ENCODE measurements at regions of chr15 and their contacts with region 1.

Region 1: GRCh38 chr15:51649659-51650521 is 27.3 kb upstream of the DMXL2 start:
- DNase-seq: peak; percentile 81
- H3K4me3 ChIP-seq: no peak overlapping the region
- H3K27ac ChIP-seq: no peak overlapping the region
- H3K4me1 ChIP-seq: peaks cover 2% of the 10 kb centered on the region
- H3K27me3 ChIP-seq: peaks cover 2 to 7% of the 10 kb centered on the region in 2 experiments
- CTCF ChIP-seq: peak; percentile 47 to 62
- POLR2A ChIP-seq: no peak

Region 2: GRCh38 chr15:50506121-50506520 is 1143.8 kb before region 1 on chr15:
- CTCF ChIA-PET with region 1: no interaction called
- POLR2A ChIA-PET with region 1: no interaction called
- dilution Hi-C with region 1: no loop called
- intact Hi-C with region 1: no loop called
- DNase-seq: no peak
- H3K4me3 ChIP-seq: no peak overlapping the region
- H3K27ac ChIP-seq: no peak overlapping the region
- H3K4me1 ChIP-seq: no peaks in the 10 kb centered on the region
- H3K27me3 ChIP-seq: no peaks in the 10 kb centered on the region
- CTCF ChIP-seq: no peak
- POLR2A ChIP-seq: no peak

Region 3: GRCh38 chr15:51629612-51630011 is 20.3 kb before region 1 on chr15:
- CTCF ChIA-PET with region 1: interaction called, 12 read pairs
- POLR2A ChIA-PET with region 1: no interaction called
- dilution Hi-C with region 1: no loop called
- intact Hi-C with region 1: no loop called
- DNase-seq: no peak
- H3K4me3 ChIP-seq: no peak overlapping the region
- H3K27ac ChIP-seq: no peak overlapping the region
- H3K4me1 ChIP-seq: no peaks in the 10 kb centered on the region
- H3K27me3 ChIP-seq: peaks cover 3 to 9% of the 10 kb centered on the region in 2 experiments
- CTCF ChIP-seq: no peak
- POLR2A ChIP-seq: no peak

Region 4: GRCh38 chr15:51737280-51738017 is 87.6 kb after region 1 on chr15 and contains the start of gene LYSMD2:
- CTCF ChIA-PET with region 1: interaction called, 25 read pairs
- POLR2A ChIA-PET with region 1: no interaction called
- dilution Hi-C with region 1: no loop called
- intact Hi-C with region 1: no loop called
- DNase-seq: peak; percentile 71
- H3K4me3 ChIP-seq: peak within 1 kb of the TSS; percentile 40 to 59 (median 52)
- H3K27ac ChIP-seq: no peak within 1 kb of the TSS
- H3K4me1 ChIP-seq: peaks cover 3% of the 10 kb centered on the region
- H3K27me3 ChIP-seq: no peaks in the 10 kb centered on the region
- CTCF ChIP-seq: no peak
- POLR2A ChIP-seq: no peak
- total RNA-seq, gene LYSMD2: 8.0 and 8.2 TPM in 2 replicates

Region 5: DNA sequence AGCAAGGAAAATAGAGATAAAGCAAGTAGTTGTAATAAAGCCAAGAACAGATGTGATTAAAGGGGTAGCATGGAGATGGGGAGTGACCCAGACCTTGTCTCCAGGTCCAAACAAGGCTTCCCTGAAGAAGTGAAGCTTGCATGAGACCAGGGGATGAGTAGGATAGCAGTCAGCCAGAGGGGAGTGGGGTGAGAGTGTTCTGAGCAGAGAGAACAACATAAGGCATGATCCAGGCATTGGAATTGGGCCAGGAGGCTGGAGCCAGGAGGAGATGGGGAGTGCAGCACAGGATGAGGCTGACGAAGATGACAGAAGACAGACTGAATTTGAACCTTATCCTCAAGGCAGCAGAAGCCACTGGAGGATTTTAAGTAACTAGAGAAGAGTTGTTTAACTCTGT is 108.8 kb after region 1 on chr15:
- CTCF ChIA-PET with region 1: interaction called, 15 read pairs
- POLR2A ChIA-PET with region 1: no interaction called
- dilution Hi-C with region 1: no loop called
- intact Hi-C with region 1: no loop called
- DNase-seq: no peak
- H3K4me3 ChIP-seq: no peak overlapping the region
- H3K27ac ChIP-seq: no peak overlapping the region
- H3K4me1 ChIP-seq: no peaks in the 10 kb centered on the region
- H3K27me3 ChIP-seq: peaks cover 23 to 27% of the 10 kb centered on the region in 2 experiments
- CTCF ChIP-seq: no peak
- POLR2A ChIP-seq: no peak

Region 6: DNA sequence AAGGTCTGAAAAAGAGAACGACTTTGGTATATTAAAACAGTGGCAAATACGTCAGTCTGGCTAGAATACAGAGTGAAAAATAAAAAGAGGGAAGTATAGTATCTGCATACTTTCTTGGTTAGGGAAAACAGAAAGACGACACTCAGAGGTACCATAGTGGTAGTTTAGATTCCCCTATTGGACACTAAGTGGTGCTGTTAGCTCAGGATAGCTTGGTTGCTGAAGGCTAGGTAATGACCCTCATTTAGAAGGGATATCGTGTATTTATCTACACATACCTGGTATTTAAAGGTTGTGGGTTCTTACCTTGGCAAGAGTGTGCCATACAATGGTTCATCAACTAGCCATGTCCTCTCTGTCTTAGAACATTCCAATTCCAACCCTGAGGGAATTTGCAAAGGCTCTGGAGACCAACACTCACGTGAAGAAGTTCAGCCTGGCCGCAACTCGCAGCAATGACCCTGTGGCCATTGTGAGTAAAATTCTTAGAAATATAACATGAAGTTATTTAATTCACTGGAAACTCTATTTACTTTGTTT is 132.5 kb after region 1 on chr15:
- CTCF ChIA-PET with region 1: interaction called, 942 read pairs
- POLR2A ChIA-PET with region 1: no interaction called
- dilution Hi-C with region 1: no loop called
- intact Hi-C with region 1: no loop called
- DNase-seq: peak; percentile 25
- H3K4me3 ChIP-seq: no peak overlapping the region
- H3K27ac ChIP-seq: no peak overlapping the region
- H3K4me1 ChIP-seq: no peaks in the 10 kb centered on the region
- H3K27me3 ChIP-seq: peaks cover 0 to 3% of the 10 kb centered on the region in 2 experiments
- CTCF ChIP-seq: peak; percentile 39 to 45
- POLR2A ChIP-seq: no peak

Region 7: DNA sequence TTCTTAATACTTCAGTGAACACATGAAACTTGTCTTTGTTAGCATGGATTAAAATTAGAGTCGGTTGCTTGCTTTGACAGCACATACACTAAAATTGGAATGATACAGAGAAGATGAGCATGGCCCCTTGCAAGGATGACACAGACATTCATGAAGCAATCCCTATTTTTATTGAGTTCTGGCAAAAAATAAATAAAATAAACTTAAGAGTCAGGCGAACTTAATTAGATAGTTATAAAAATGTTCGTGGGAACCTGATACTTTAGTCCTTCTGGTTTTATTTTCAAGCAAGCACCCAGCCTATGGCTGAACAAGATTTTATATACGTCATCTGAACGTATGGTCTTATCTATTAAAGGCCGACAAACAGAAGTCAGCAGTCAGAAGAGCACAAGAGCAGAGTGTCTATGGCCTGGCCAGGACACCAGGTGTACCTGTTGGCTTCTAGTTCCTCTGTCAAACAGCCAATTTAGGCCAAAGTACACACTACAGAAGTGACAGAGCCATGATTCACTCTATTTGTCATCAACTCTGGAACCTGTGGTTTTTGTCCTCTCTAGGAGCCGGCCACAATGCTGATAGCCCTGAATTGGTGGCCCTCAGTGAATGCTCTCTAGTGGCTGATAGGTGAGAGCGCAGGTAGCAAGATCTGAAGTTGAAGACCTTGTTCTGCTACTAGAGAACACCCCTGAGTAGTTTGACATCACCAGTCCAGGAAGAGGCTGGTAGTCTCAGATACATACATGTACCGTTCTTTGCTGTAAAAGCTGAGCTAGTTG is 257.4 kb after region 1 on chr15:
- CTCF ChIA-PET with region 1: interaction called, 17 read pairs
- POLR2A ChIA-PET with region 1: no interaction called
- dilution Hi-C with region 1: no loop called
- intact Hi-C with region 1: loop called (anchors 5 kb)
- DNase-seq: no peak
- H3K4me3 ChIP-seq: no peak overlapping the region
- H3K27ac ChIP-seq: no peak overlapping the region
- H3K4me1 ChIP-seq: no peaks in the 10 kb centered on the region
- H3K27me3 ChIP-seq: no peaks in the 10 kb centered on the region
- CTCF ChIP-seq: no peak
- POLR2A ChIP-seq: no peak

Region 8: DNA sequence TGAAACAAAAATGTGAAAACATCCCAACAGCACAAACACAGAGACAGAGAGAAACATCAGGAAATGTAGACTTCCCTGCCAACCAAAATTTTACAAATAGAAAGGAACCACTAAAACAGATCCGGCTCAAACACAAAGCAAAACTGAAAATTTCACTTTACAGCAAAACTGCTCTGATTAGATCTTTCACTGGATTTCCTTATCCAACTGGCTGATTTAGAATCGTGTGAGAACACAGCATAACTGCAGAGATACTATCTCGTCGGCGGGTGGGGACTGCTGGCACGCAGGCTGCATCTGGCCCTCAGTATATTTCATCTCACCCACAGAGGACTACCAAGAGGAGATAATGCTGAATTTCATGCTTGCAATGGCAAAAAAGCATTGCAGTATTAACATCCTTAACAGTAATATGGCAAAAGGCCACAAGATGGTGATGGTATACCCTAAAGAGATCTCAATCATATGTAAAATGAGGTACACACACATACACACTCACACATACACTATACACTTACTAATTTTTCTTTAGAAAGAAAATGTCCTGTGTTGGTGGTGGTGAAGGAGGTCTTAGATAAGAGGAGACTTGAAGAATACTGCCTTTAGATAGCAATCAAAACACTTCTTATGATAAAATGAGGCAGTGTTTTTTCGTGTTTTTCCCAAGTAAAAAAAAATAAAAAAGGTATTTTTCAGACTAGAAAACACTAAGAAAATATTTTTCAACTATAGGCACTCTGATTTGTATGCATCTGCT is 332.3 kb after region 1 on chr15:
- CTCF ChIA-PET with region 1: no interaction called
- POLR2A ChIA-PET with region 1: no interaction called
- dilution Hi-C with region 1: no loop called
- intact Hi-C with region 1: no loop called
- DNase-seq: peak; percentile 94
- H3K4me3 ChIP-seq: peak overlapping the region; percentile 5 to 77 (median 10)
- H3K27ac ChIP-seq: peak overlapping the region; percentile 96
- H3K4me1 ChIP-seq: peaks cover 20% of the 10 kb centered on the region
- H3K27me3 ChIP-seq: no peaks in the 10 kb centered on the region
- CTCF ChIP-seq: peak in 1 of 2 donors; percentile 56
- POLR2A ChIP-seq: peak; percentile 38

Measured in endothelial cell of umbilical vein (primary cell).